ENCODE measurements at regions of chr4 and their contacts with region 1.

Region 1: DNA sequence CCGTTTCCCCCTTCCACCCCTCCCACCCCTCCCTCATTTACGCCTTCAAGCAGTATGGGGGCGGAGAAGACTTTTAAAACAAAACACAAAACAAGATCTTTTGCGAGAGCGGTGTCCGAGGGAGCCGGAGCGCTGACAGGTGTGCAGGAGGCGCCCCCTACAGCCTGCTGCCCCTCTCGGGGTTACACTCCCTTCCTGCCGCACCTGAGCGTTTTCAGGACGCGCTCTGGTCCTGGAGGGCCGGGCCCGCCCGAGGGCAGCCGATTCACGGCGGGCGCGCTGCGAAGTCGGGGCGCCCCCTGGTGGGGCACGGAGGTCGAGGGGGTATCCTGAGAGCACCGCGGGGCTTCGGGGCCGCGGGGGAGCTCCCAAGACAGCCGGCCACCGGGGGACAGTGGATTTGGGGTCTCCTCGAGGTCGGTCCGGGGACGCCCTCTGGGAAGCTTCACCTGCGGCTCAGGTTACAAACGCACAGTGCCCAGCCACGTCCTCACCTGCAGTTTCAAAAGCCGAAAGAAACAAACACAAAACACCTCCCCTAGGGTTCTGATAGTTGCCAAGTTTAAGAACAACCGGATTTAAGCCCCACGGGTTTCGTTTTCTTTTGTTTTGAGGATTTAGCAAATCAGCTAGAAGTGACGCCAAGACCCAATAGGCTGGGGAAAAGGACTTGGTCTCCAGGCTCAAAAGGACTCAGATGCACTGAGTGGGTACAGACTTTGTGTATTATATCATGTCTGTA is 8.0 kb upstream of the NEUROG2 start:
- DNase-seq: peak; percentile 93
- H3K4me3 ChIP-seq: peak overlapping the region; percentile 69
- H3K27ac ChIP-seq: no peak overlapping the region
- H3K4me1 ChIP-seq: peaks cover 20% of the 10 kb centered on the region
- CTCF ChIP-seq: peak; percentile 99

Region 2: GRCh38 chr4:112075129-112075753 is 448.7 kb before region 1 on chr4:
- CTCF ChIA-PET with region 1: interaction called, 3 read pairs
- POLR2A ChIA-PET with region 1: no interaction called
- intact Hi-C with region 1: loop called (anchors 5 kb)
- DNase-seq: peak; percentile 68
- H3K4me3 ChIP-seq: no peak overlapping the region
- H3K27ac ChIP-seq: no peak overlapping the region
- H3K4me1 ChIP-seq: no peaks in the 10 kb centered on the region
- CTCF ChIP-seq: peak; percentile 96

Region 3: GRCh38 chr4:112099701-112100297 is 424.1 kb before region 1 on chr4:
- CTCF ChIA-PET with region 1: interaction called, 9 read pairs
- POLR2A ChIA-PET with region 1: interaction called, 5 read pairs
- intact Hi-C with region 1: loop called (anchors 1 kb)
- DNase-seq: peak; percentile 63
- H3K4me3 ChIP-seq: no peak overlapping the region
- H3K27ac ChIP-seq: no peak overlapping the region
- H3K4me1 ChIP-seq: no peaks in the 10 kb centered on the region
- CTCF ChIP-seq: peak; percentile 97

Region 4: DNA sequence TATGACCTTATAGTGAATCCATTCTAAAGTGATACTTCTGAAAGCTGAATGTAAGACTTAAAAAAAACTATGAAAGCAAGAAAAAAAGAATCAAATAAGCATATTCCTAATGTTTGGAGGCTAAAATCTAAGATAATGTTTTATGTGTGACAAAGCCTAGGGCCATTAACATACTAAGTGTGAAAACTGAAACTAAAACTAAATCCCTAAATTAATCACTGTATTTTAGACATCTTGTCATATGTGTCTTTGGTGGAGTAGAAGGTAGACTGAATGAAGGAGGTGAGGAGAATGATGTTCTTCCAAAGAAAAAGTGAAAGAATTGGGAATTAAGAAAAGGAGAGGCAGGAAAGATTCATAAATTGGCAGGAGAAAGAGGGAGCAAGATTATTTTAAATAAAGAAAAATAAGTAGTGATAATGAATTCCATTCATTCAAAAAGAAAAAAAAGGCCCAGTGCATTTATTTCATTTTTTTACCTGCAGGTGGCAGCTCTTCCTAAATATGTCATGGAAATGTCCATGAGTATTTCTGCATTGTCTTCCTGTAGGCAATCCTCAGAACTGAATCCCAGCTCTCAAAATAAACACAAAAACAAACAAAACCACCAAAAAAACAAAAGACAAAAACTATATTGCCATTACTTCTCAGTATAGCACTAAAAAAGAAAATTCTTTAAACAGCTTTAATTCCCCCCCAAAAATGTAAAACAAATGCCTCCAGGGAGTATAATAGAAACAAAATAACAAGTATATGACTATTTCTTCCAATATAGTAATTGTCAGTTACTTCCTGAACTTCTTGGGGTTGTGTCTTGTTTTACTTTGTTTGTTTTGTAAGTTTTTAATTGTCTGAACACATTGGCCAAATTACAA is 309.3 kb before region 1 on chr4:
- CTCF ChIA-PET with region 1: interaction called, 3 read pairs
- POLR2A ChIA-PET with region 1: interaction called, 3 read pairs
- intact Hi-C with region 1: loop called (anchors 1 kb)
- DNase-seq: peak; percentile 51
- H3K4me3 ChIP-seq: no peak overlapping the region
- H3K27ac ChIP-seq: no peak overlapping the region
- H3K4me1 ChIP-seq: peaks cover 4% of the 10 kb centered on the region
- CTCF ChIP-seq: peak; percentile 84

Region 5: GRCh38 chr4:112327965-112328733 is 195.8 kb before region 1 on chr4:
- CTCF ChIA-PET with region 1: no interaction called
- POLR2A ChIA-PET with region 1: no interaction called
- intact Hi-C with region 1: loop called (anchors 1 kb)
- DNase-seq: peak; percentile 51
- H3K4me3 ChIP-seq: no peak overlapping the region
- H3K27ac ChIP-seq: no peak overlapping the region
- H3K4me1 ChIP-seq: no peaks in the 10 kb centered on the region
- CTCF ChIP-seq: peak; percentile 80